OCI-LY7 (cell line): ENCODE measurements at regions of chr19 and their contacts with region 1.

Region 1: GRCh38 chr19:33778089-33778791 is 18.4 kb upstream of the KCTD15 start:
- DNase-seq: peak; percentile 82
- H3K4me3 ChIP-seq: no peak overlapping the region
- H3K27ac ChIP-seq: no peak overlapping the region
- H3K4me1 ChIP-seq: no peaks in the 10 kb centered on the region
- CTCF ChIP-seq: peak; percentile 99

Region 2: DNA sequence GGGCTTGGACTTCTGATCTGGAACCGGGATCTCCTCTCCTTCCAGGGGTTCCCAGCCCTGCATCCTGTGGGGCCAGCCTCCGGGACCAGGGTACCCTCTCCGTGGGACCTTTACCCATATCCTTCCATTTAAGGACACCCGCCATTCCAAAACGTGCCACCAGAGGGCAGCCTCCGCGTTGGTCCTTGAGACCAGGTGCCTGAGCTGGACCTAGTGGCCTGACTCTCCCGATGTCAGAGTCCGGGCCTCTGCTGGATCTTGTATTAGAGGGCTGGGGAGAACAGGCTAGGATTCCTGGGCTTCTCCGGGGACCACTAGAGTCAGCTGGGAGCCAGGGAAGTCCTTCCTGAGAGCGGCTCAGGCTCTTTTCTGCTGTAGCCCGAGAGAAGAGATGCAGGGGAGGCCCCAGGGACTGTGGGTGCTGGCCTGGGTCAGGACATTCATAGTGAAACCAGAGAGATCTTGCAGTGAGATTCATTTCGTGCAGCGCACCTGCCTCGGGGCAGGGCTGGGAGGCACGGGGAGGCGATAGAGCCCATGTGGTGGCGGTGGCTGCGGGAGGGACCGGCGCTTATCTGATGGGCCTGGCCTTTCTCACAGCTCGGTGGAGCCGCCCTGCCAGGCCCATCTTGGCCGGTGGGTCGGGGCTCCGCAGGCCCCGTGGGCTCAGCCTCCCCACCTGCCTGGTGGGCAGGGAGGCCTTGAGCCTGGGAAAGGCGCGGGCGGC is 542.8 kb before region 1 on chr19:
- CTCF ChIA-PET with region 1: no interaction called
- POLR2A ChIA-PET with region 1: no interaction called
- intact Hi-C with region 1: loop called (anchors 10 kb)
- DNase-seq: peak; percentile 68
- H3K4me3 ChIP-seq: no peak overlapping the region
- H3K27ac ChIP-seq: no peak overlapping the region
- H3K4me1 ChIP-seq: no peaks in the 10 kb centered on the region
- CTCF ChIP-seq: peak; percentile 88

Region 3: DNA sequence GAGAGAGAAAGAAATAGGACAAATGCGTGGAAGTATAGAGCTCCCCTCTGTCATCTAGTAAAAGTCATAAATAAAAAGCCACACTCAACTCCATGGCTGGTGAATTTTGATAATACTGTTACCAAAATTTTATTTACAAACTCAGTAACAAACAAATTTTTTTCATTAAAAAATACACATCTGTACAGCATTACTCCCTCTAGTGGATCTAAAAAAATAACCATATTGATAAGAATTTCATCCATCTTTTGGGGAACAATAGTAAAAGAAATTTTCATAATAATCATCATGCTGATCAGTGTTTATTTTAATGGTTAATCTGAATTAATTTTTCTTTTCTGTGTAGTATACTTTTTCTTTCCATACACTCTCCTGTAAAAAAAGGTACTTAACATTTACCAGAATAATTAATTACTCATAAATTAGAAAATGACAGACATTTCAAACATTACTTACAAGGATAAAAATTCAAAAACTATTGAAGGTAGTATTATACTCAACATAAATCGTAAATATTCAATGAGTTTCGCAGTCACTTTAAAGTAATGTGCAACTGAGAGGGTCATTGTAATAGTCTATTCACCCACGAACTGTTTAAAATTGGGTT is 220.6 kb after region 1 on chr19:
- CTCF ChIA-PET with region 1: no interaction called
- POLR2A ChIA-PET with region 1: no interaction called
- intact Hi-C with region 1: loop called (anchors 1 kb)
- DNase-seq: peak; percentile 7
- H3K4me3 ChIP-seq: no peak overlapping the region
- H3K27ac ChIP-seq: no peak overlapping the region
- H3K4me1 ChIP-seq: no peaks in the 10 kb centered on the region
- CTCF ChIP-seq: peak; percentile 74

Region 4: DNA sequence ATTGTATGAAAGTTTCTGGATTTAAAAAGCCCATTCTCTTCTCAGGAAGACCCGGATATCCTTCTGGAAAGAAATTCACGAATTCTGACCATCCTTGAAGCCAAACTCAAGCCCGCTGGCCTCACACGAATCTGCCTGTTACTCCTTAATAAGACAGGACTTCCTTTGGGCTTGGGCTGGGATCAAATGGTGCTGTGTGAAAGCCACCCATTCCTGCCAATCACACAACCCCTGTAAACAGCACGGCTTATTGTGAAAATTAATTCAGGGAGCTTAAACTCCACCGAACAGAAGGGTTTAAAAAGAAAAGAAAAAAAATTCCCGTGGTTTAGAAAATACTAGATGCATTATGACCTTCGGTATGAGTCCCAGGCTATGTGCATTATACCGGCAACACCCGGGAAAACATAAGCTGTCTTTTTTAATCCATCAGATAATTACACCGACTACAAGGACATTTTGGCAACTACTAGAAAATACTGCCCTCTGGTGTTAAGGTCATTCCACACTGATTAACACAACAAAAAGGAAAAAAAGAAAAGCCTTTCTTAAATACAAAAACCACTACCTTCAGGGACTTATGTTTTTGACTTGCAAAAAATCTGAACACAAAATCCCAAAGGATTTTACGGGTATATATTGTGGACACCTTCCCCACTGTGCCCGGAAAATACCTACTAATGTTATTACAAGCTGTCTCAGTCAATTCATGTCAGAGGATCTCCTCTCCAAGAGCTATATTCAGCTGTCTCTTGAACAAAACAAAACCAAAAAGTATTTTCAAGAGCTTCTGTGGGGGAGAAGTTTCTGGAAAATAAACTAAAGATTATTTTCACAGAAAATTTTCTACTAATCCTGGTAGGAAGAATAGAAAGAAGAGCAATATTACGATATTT is 318.0 kb after region 1 on chr19:
- CTCF ChIA-PET with region 1: interaction called, 4 read pairs
- POLR2A ChIA-PET with region 1: no interaction called
- intact Hi-C with region 1: loop called (anchors 1 kb)
- DNase-seq: peak; percentile 68
- H3K4me3 ChIP-seq: no peak overlapping the region
- H3K27ac ChIP-seq: no peak overlapping the region
- H3K4me1 ChIP-seq: no peaks in the 10 kb centered on the region
- CTCF ChIP-seq: peak; percentile 91